ENCODE measurements at regions of chr16 and their contacts with region 1.

Region 1: GRCh38 chr16:4766874-4767628 is at the start of gene ZNF500:
- DNase-seq: peak; percentile 95
- ATAC-seq: peak; percentile 91
- H3K4me3 ChIP-seq: peak within 1 kb of the TSS; percentile 69 to 94 (median 87)
- H3K4me3 Mint-ChIP-seq: peak within 1 kb of the TSS; percentile 98
- H3K27ac ChIP-seq: peak within 1 kb of the TSS in 1 of 2 donors; percentile 80
- H3K27ac Mint-ChIP-seq: peak within 1 kb of the TSS; percentile 95
- H3K4me1 ChIP-seq: peaks cover 15 to 33% of the 10 kb centered on the region in 2 donors
- H3K4me1 Mint-ChIP-seq: peaks cover 31% of the 10 kb centered on the region
- H3K27me3 ChIP-seq: no peaks in the 10 kb centered on the region
- H3K27me3 Mint-ChIP-seq: no peaks in the 10 kb centered on the region
- CTCF ChIP-seq: no peak
- total RNA-seq, gene ZNF500: 26.5 and 35.7 TPM in 2 replicates

Region 2: GRCh38 chr16:4734063-4734729 is 32.9 kb before region 1 on chr16 and contains the starts of genes ANKS3 and DNAAF8:
- CTCF ChIA-PET with region 1: interaction called, 12 read pairs
- POLR2A ChIA-PET with region 1: interaction called, 14 read pairs
- intact Hi-C with region 1: loop called (anchors 1 kb)
- DNase-seq: peak; percentile 89
- ATAC-seq: peak; percentile 80
- H3K4me3 ChIP-seq: peak within 1 kb of the TSS; percentile 79 to 98 (median 91)
- H3K4me3 Mint-ChIP-seq: peak within 1 kb of the TSS; percentile 90
- H3K27ac ChIP-seq: peak within 1 kb of the TSS; percentile 35 to 89
- H3K27ac Mint-ChIP-seq: peak within 1 kb of the TSS; percentile 89
- H3K4me1 ChIP-seq: peaks cover 10 to 13% of the 10 kb centered on the region in 2 donors
- H3K4me1 Mint-ChIP-seq: peaks cover 17% of the 10 kb centered on the region
- H3K27me3 ChIP-seq: no peaks in the 10 kb centered on the region
- H3K27me3 Mint-ChIP-seq: no peaks in the 10 kb centered on the region
- CTCF ChIP-seq: no peak
- total RNA-seq, gene ANKS3: 31.9 and 36.2 TPM in 2 replicates
- total RNA-seq, gene DNAAF8: 0.19 and 0.44 TPM in 2 replicates